Astrocyte of the cerebellum (primary cell): ENCODE measurements at regions of chr11 and their contacts with region 1.

Region 1: DNA sequence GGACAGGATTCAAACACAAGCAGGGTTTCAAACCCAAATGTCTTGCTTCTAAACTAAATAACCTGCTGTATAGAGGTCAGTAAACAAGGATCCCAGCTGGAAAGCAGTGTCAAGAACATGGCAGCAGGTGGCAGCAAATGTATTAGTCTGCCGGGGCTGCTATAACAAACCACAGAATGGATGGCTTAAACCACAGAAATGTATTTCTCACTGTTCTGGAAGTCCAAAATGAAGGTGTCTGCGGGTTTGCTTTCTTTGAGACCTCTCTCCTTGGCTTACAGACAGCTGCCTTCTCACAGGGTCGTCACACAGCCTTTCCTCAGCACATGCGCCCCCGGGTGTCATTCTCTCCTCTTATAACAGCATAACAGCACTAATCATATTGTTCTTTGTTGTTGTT is 65.1 kb upstream of the LRRC55 start:
- DNase-seq: peak; percentile 16
- H3K4me3 ChIP-seq: no peak overlapping the region
- CTCF ChIP-seq: peak; percentile 49

Region 2: GRCh38 chr11:56841210-56841810 is 275.3 kb before region 1 on chr11:
- in situ Hi-C with region 1: loop called (anchors 5 kb)
- DNase-seq: peak; percentile 29
- H3K4me3 ChIP-seq: no peak overlapping the region
- CTCF ChIP-seq: peak; percentile 69